Sigmoid colon (tissue), 7 donors: ENCODE measurements at regions of chr1 and their contacts with region 1.

Region 1: GRCh38 chr1:119647734-119648619 is at the start of gene ZNF697:
- DNase-seq: peak; percentile 99
- H3K4me3 ChIP-seq: peak within 1 kb of the TSS; percentile 62 to 96 (median 80)
- H3K27ac ChIP-seq: peak within 1 kb of the TSS; percentile 85 to 89 (median 88)
- H3K4me1 ChIP-seq: peaks cover 0 to 25% (median 18%) of the 10 kb centered on the region in 4 donors
- H3K27me3 ChIP-seq: no peaks in the 10 kb centered on the region
- CTCF ChIP-seq: peak in 2 of 4 experiments; percentile 6 to 19
- EP300 ChIP-seq: no peak
- POLR2A ChIP-seq: peak; percentile 21 to 74
- total RNA-seq, gene ZNF697: 2.4 to 6.6 (median 4.4) TPM

Region 2: GRCh38 chr1:119140177-119141019 is 507.6 kb before region 1 on chr1 and contains the start of gene WARS2:
- intact Hi-C with region 1: loop called (anchors 10 kb)
- DNase-seq: peak; percentile 99
- H3K4me3 ChIP-seq: peak within 1 kb of the TSS; percentile 42 to 61 (median 56)
- H3K27ac ChIP-seq: peak within 1 kb of the TSS; percentile 90 to 94 (median 92)
- H3K4me1 ChIP-seq: peaks cover 0 to 22% (median 12%) of the 10 kb centered on the region in 4 donors
- H3K27me3 ChIP-seq: no peaks in the 10 kb centered on the region
- CTCF ChIP-seq: no peak
- EP300 ChIP-seq: peak in 2 of 4 donors; percentile 3 to 44
- POLR2A ChIP-seq: peak; percentile 46 to 76
- total RNA-seq, gene WARS2: 10.7 to 18.8 (median 14.5) TPM

Region 3: GRCh38 chr1:119235120-119235519 is 412.9 kb before region 1 on chr1:
- intact Hi-C with region 1: no loop called
- DNase-seq: no peak
- H3K4me3 ChIP-seq: no peak overlapping the region
- H3K27ac ChIP-seq: no peak overlapping the region
- H3K4me1 ChIP-seq: no peaks in the 10 kb centered on the region
- H3K27me3 ChIP-seq: no peaks in the 10 kb centered on the region
- CTCF ChIP-seq: no peak
- EP300 ChIP-seq: no peak
- POLR2A ChIP-seq: no peak

Region 4: GRCh38 chr1:119327436-119328155 is 320.4 kb before region 1 on chr1:
- intact Hi-C with region 1: loop called (anchors 10 kb)
- DNase-seq: peak; percentile 96
- H3K4me3 ChIP-seq: peak overlapping the region; percentile 30 to 51 (median 44)
- H3K27ac ChIP-seq: peak overlapping the region in 3 of 4 donors; percentile 73 to 80 (median 74)
- H3K4me1 ChIP-seq: peaks cover 0 to 58% (median 45%) of the 10 kb centered on the region in 4 donors
- H3K27me3 ChIP-seq: no peaks in the 10 kb centered on the region
- CTCF ChIP-seq: peak in 1 of 4 experiments; percentile 18
- EP300 ChIP-seq: peak; percentile 50 to 89 (median 75)
- POLR2A ChIP-seq: no peak

Region 5: DNA sequence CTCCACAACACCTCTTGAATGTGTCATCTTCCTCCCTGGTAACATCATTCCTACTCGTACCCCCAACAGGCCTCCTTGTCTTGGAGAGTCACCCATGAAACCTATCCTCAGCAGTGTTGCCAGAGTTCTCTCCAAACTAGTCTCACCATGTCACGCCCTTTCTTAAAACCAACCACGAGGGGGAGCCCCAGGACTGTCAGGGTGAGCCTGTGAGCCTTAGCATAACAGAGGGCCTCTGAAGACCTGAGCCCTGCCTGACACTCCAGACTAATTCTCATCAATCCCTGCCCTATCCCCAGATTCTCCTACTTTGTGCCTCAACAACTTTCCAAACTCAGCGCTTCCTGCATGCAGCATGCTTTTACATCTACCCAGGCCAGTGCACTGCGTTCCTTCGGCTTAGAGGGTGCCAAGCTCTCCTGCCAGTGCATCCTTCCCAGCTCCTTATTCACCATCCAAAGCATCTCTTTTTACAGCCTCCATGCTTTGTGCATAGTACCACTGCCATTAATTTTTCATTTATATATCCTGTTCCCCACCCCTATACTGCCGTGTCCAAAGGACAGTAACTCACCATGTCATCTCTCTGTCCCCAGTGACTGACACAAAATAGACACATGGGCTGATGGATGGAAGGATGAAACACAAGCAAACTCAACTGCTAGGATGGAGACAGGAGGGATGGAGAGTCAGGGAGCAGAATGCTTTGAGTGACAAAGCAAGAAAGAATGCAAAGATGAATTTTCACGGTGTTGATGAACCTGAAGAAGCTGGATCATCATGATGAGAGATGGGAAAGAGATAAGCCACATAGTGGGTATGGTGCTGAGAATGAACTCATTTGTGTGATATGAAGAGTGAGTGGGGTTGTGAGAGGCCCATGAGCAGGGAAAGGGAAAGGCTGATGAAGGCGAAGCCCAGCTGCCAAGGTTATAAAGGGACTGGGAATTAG is 33.9 kb before region 1 on chr1:
- intact Hi-C with region 1: loop called (anchors 5 kb)
- DNase-seq: peak; percentile 92
- H3K4me3 ChIP-seq: no peak overlapping the region
- H3K27ac ChIP-seq: no peak overlapping the region
- H3K4me1 ChIP-seq: peaks cover 0 to 4% (median 0%) of the 10 kb centered on the region in 4 donors
- H3K27me3 ChIP-seq: no peaks in the 10 kb centered on the region
- CTCF ChIP-seq: peak; percentile 54 to 86 (median 80)
- EP300 ChIP-seq: no peak
- POLR2A ChIP-seq: no peak

Region 6: DNA sequence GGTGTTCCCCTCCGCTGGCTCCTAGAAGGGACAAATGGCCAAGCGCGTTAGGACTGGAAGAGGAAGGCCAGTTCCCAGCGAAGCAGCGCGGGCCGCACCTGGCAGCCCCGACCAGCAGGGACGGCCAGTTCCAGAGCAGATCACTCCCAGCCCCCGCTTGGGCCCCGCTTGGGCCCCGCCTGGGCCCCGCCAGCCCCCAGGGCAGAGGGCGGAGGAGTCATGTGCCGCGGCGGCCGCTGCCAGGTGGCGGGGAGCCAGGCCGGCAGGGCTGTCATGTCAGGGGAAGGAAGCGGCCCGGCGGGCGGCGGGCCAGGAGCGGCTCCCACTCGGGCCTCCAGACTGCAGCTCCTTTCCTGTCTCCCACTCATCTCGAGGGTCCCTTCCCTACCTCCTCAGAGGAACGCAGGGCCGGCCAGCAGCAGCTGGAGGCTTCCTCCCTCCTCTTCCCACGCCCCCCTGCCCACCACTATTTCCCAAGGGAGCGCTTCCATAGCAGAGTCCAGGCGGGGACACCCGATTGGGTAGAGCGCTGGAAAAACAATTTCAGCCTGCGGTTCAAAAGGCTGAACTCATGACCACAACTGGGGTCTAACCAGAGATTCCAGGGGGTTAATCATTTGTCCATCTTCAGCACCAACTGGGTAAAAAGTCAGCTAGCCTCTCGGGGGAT is 16.4 kb before region 1 on chr1:
- intact Hi-C with region 1: loop called (anchors 2 kb)
- DNase-seq: peak; percentile 96
- H3K4me3 ChIP-seq: peak overlapping the region; percentile 25 to 43 (median 39)
- H3K27ac ChIP-seq: peak overlapping the region; percentile 65 to 74 (median 70)
- H3K4me1 ChIP-seq: peaks cover 0 to 47% (median 42%) of the 10 kb centered on the region in 4 donors
- H3K27me3 ChIP-seq: no peaks in the 10 kb centered on the region
- CTCF ChIP-seq: no peak
- EP300 ChIP-seq: peak in 2 of 4 donors; percentile 35 to 73
- POLR2A ChIP-seq: no peak

Region 7: GRCh38 chr1:119675349-119676345 is 27.7 kb after region 1 on chr1:
- intact Hi-C with region 1: loop called (anchors 2 kb)
- DNase-seq: peak; percentile 90
- H3K4me3 ChIP-seq: peak overlapping the region; percentile 17 to 40 (median 36)
- H3K27ac ChIP-seq: peak overlapping the region in 3 of 4 donors; percentile 29 to 53 (median 49)
- H3K4me1 ChIP-seq: peaks cover 0 to 5% (median 0%) of the 10 kb centered on the region in 4 donors
- H3K27me3 ChIP-seq: no peaks in the 10 kb centered on the region
- CTCF ChIP-seq: peak; percentile 49 to 86 (median 65)
- EP300 ChIP-seq: no peak
- POLR2A ChIP-seq: no peak

Region 8: DNA sequence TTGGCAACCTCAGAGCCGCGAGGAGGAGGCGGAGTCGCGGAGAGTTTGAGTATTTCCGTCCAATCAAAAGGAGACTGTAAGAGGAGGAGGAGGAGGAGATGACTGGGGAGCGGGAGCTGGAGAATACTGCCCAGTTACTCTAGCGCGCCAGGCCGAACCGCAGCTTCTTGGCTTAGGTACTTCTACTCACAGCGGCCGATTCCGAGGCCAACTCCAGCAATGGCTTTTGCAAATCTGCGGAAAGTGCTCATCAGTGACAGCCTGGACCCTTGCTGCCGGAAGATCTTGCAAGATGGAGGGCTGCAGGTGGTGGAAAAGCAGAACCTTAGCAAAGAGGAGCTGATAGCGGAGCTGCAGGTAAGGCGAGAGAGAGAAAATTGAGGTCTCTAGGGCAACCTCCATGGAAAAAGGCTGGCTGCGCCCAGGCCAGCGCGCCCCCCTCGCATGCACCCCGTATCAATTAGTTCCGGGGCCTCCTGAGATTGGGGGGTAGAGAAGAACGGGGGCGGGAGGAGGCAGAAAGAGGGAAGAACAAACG is 63.9 kb after region 1 on chr1 and contains the start of gene PHGDH:
- intact Hi-C with region 1: no loop called
- DNase-seq: peak; percentile 87
- H3K4me3 ChIP-seq: peak within 1 kb of the TSS; percentile 53 to 72 (median 67)
- H3K27ac ChIP-seq: peak within 1 kb of the TSS; percentile 78 to 89 (median 82)
- H3K4me1 ChIP-seq: peaks cover 0 to 30% (median 19%) of the 10 kb centered on the region in 4 donors
- H3K27me3 ChIP-seq: no peaks in the 10 kb centered on the region
- CTCF ChIP-seq: no peak
- EP300 ChIP-seq: no peak
- POLR2A ChIP-seq: peak; percentile 26 to 56
- total RNA-seq, gene PHGDH: 15.8 to 37.7 (median 26.0) TPM